ENCODE measurements at regions of chr1 and their contacts with region 1.

Region 1: GRCh38 chr1:91165033-91165654 is 143.3 kb upstream of the ZNF644 start:
- DNase-seq: peak; percentile 83
- H3K4me3 Mint-ChIP-seq: no peak overlapping the region
- H3K27ac Mint-ChIP-seq: no peak overlapping the region
- H3K4me1 Mint-ChIP-seq: no peaks in the 10 kb centered on the region
- H3K27me3 Mint-ChIP-seq: no peaks in the 10 kb centered on the region

Region 2: GRCh38 chr1:89804642-89805237 is 1360.4 kb before region 1 on chr1:
- CTCF ChIA-PET with region 1: no interaction called
- POLR2A ChIA-PET with region 1: no interaction called
- intact Hi-C with region 1: no loop called
- DNase-seq: peak; percentile 90
- H3K4me3 Mint-ChIP-seq: no peak overlapping the region
- H3K27ac Mint-ChIP-seq: no peak overlapping the region
- H3K4me1 Mint-ChIP-seq: no peaks in the 10 kb centered on the region
- H3K27me3 Mint-ChIP-seq: no peaks in the 10 kb centered on the region

Region 3: GRCh38 chr1:90133133-90133532 is 1032.0 kb before region 1 on chr1:
- CTCF ChIA-PET with region 1: no interaction called
- POLR2A ChIA-PET with region 1: no interaction called
- intact Hi-C with region 1: loop called (anchors 10 kb)
- DNase-seq: no peak
- H3K4me3 Mint-ChIP-seq: no peak overlapping the region
- H3K27ac Mint-ChIP-seq: no peak overlapping the region
- H3K4me1 Mint-ChIP-seq: no peaks in the 10 kb centered on the region
- H3K27me3 Mint-ChIP-seq: peaks cover 3% of the 10 kb centered on the region

Region 4: GRCh38 chr1:90729504-90730242 is 435.5 kb before region 1 on chr1:
- CTCF ChIA-PET with region 1: interaction called, 15 read pairs
- POLR2A ChIA-PET with region 1: no interaction called
- intact Hi-C with region 1: no loop called
- DNase-seq: peak; percentile 41
- H3K4me3 Mint-ChIP-seq: peak overlapping the region; percentile 33
- H3K27ac Mint-ChIP-seq: no peak overlapping the region
- H3K4me1 Mint-ChIP-seq: peaks cover 40% of the 10 kb centered on the region
- H3K27me3 Mint-ChIP-seq: peaks cover 78% of the 10 kb centered on the region

Region 5: GRCh38 chr1:91021686-91022517 is 143.2 kb before region 1 on chr1 and contains the start of gene ZNF644:
- CTCF ChIA-PET with region 1: interaction called, 5 read pairs
- POLR2A ChIA-PET with region 1: no interaction called
- intact Hi-C with region 1: loop called (anchors 2 kb)
- DNase-seq: peak; percentile 96
- H3K4me3 Mint-ChIP-seq: peak within 1 kb of the TSS; percentile 98
- H3K27ac Mint-ChIP-seq: peak within 1 kb of the TSS; percentile 99
- H3K4me1 Mint-ChIP-seq: peaks cover 63% of the 10 kb centered on the region
- H3K27me3 Mint-ChIP-seq: no peaks in the 10 kb centered on the region
- total RNA-seq, gene ZNF644: 37.5 to 42.5 TPM

Region 6: GRCh38 chr1:91226471-91227120 is 61.5 kb after region 1 on chr1:
- CTCF ChIA-PET with region 1: no interaction called
- POLR2A ChIA-PET with region 1: no interaction called
- intact Hi-C with region 1: no loop called
- DNase-seq: no peak
- H3K4me3 Mint-ChIP-seq: no peak overlapping the region
- H3K27ac Mint-ChIP-seq: no peak overlapping the region
- H3K4me1 Mint-ChIP-seq: no peaks in the 10 kb centered on the region
- H3K27me3 Mint-ChIP-seq: peaks cover 1% of the 10 kb centered on the region

Region 7: GRCh38 chr1:91244737-91245136 is 79.6 kb after region 1 on chr1:
- CTCF ChIA-PET with region 1: interaction called, 11 read pairs
- POLR2A ChIA-PET with region 1: no interaction called
- intact Hi-C with region 1: no loop called
- DNase-seq: no peak
- H3K4me3 Mint-ChIP-seq: no peak overlapping the region
- H3K27ac Mint-ChIP-seq: no peak overlapping the region
- H3K4me1 Mint-ChIP-seq: no peaks in the 10 kb centered on the region
- H3K27me3 Mint-ChIP-seq: peaks cover 9% of the 10 kb centered on the region

Region 8: GRCh38 chr1:91345395-91346005 is 180.4 kb after region 1 on chr1:
- CTCF ChIA-PET with region 1: no interaction called
- POLR2A ChIA-PET with region 1: no interaction called
- intact Hi-C with region 1: no loop called
- DNase-seq: no peak
- H3K4me3 Mint-ChIP-seq: no peak overlapping the region
- H3K27ac Mint-ChIP-seq: no peak overlapping the region
- H3K4me1 Mint-ChIP-seq: no peaks in the 10 kb centered on the region
- H3K27me3 Mint-ChIP-seq: peaks cover 8% of the 10 kb centered on the region

Region 9: GRCh38 chr1:91929250-91929649 is 764.1 kb after region 1 on chr1:
- CTCF ChIA-PET with region 1: interaction called, 4 read pairs
- POLR2A ChIA-PET with region 1: no interaction called
- intact Hi-C with region 1: loop called (anchors 5 kb)
- DNase-seq: no peak
- H3K4me3 Mint-ChIP-seq: no peak overlapping the region
- H3K27ac Mint-ChIP-seq: no peak overlapping the region
- H3K4me1 Mint-ChIP-seq: peaks cover under 1% of the 10 kb centered on the region
- H3K27me3 Mint-ChIP-seq: no peaks in the 10 kb centered on the region